Tibial artery (tissue), 4 donors: ENCODE measurements at regions of chr5 and their contacts with region 1.

Region 1: GRCh38 chr5:178895651-178896571 is at the start of gene ZFP2:
- DNase-seq: peak; percentile 38 to 70
- H3K4me3 ChIP-seq: peak within 1 kb of the TSS; percentile 78 to 82
- H3K27ac ChIP-seq: peak within 1 kb of the TSS; percentile 78 to 84
- H3K4me1 ChIP-seq: peaks cover 0 to 6% (median 2%) of the 10 kb centered on the region in 4 donors
- H3K27me3 ChIP-seq: no peaks in the 10 kb centered on the region
- CTCF ChIP-seq: no peak

Region 2: DNA sequence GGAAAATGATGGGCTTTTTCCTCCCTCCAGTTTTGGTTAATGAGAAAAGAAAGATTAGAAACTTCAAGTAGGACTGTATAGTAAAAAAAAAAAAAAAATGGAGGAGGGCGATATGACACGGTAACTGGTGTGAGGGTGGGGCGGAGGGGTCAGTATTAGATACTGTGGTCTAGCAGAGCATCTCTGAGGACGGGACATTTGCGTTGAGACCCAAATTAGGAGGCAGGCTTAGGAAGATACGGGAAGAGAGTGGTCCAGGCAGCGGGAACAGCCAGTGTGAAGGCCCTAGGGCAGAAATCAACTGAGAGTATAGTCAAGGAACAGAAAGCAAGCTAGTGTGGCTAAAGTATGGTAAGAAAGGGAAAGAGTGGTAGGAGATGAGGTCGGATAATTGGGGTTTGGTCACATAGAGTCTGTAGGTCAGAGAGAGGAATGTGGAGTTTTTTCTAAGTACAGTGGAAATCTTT is 764.4 kb before region 1 on chr5:
- intact Hi-C with region 1: no loop called
- DNase-seq: no peak
- H3K4me3 ChIP-seq: peak overlapping the region; percentile 72 to 86
- H3K27ac ChIP-seq: peak overlapping the region; percentile 90 to 95
- H3K4me1 ChIP-seq: peaks cover 0 to 18% (median 12%) of the 10 kb centered on the region in 4 donors
- H3K27me3 ChIP-seq: no peaks in the 10 kb centered on the region
- CTCF ChIP-seq: no peak

Region 3: DNA sequence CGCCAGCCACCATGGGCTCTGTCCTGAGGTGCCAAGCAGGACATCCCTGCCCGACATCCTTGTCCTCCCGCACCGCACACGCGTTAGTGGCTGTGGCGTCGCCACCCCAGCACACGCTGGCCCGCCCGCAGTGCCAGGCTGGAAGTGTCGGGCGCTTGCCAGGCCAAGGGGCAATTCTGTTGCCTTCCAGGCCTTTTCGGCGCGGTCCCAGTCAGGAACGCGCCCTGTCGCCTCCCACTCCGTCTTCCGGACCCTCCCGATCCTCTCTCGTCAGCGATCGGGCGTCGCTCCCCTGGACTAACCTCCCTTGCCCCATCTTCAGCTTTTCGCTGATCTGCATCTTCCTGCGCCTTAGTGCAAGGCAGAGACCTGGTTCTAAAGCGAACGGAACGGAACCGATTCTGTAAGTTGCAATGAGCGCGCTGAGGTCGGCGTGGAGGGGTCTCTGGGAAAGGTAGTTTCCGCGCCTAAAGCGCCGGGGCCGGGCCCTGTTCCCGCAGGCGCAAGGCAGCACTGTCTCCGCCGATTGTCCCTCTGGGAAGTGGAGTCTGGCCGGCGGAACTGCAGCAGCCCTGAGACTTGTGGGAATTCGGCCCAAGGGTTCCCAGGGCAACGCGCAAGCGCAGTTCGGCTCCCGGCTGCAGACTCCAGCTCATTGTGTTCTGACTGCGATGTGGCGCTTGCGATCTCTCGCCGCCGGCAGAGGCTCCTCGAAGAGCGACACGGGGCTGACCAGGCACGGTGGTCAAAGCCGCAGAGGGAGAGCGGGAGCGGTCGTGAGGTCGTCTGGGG is 44.9 kb after region 1 on chr5 and contains the start of gene ZNF454:
- intact Hi-C with region 1: loop called (anchors 10 kb)
- DNase-seq: peak; percentile 86 to 93
- H3K4me3 ChIP-seq: peak within 1 kb of the TSS; percentile 81 to 82
- H3K27ac ChIP-seq: peak within 1 kb of the TSS; percentile 79 to 85
- H3K4me1 ChIP-seq: peaks cover 0 to 14% (median 10%) of the 10 kb centered on the region in 4 donors
- H3K27me3 ChIP-seq: no peaks in the 10 kb centered on the region
- CTCF ChIP-seq: no peak

Region 4: GRCh38 chr5:179089502-179089901 is 193.6 kb after region 1 on chr5:
- intact Hi-C with region 1: no loop called
- DNase-seq: no peak
- H3K4me3 ChIP-seq: no peak overlapping the region
- H3K27ac ChIP-seq: no peak overlapping the region
- H3K4me1 ChIP-seq: no peaks in the 10 kb centered on the region
- H3K27me3 ChIP-seq: no peaks in the 10 kb centered on the region
- CTCF ChIP-seq: no peak